CD4-positive, alpha-beta memory T cell (primary cell): ENCODE measurements at regions of chr10 and their contacts with region 1.

Region 1: DNA sequence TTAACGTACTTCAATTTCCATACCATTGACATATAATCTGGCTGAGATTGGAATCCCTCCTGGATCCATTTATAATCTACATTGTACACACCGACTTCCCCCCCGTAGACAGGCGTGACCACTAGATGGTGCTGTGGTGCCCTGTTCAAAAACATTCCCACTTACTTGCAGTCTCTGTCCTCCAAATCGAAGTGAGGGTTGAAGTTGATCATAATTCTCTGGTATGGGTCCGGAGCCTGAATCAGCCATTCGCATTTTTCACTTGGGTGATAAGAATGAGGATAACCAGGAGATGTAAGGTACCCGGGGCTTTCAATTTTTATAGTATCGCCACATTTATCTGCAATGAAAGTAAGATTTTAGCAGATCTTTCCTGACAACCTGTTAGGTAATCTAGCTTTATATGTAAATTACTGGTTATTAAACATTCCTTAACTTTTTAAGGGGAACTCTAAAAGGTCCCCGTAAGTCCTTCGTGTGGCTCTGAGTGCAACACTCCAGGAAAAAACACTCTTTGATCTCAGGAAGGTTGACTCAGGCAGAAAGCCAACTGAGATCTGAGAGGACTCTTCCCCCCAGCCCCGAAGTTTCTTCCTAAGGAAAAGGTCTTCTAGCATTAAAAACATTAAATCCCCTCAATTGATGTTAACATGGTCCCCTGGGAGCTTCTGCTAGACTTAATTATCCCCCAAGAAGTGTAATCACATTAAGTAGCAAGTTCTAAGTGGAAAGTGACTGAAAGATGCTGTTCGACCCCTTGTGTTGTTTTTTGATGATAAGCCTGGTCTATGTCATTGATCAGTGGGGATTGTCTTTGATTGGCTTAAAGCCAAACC is 3.7 kb downstream of the NRP1 start:
- DNase-seq: peak; percentile 49 to 67 (median 64)
- H3K4me3 ChIP-seq: no peak overlapping the region
- H3K4me3 Mint-ChIP-seq: peak overlapping the region in 4 of 8 donors; percentile 55 to 59 (median 56)
- H3K27ac ChIP-seq: no peak overlapping the region
- H3K27ac Mint-ChIP-seq: no peak overlapping the region
- H3K4me1 ChIP-seq: peaks cover 15% of the 10 kb centered on the region
- H3K4me1 Mint-ChIP-seq: peaks cover 9 to 27% (median 16%) of the 10 kb centered on the region in 4 donors
- H3K27me3 ChIP-seq: peaks cover 13% of the 10 kb centered on the region
- H3K27me3 Mint-ChIP-seq: peaks cover 50% of the 10 kb centered on the region in 2 donors

Region 2: DNA sequence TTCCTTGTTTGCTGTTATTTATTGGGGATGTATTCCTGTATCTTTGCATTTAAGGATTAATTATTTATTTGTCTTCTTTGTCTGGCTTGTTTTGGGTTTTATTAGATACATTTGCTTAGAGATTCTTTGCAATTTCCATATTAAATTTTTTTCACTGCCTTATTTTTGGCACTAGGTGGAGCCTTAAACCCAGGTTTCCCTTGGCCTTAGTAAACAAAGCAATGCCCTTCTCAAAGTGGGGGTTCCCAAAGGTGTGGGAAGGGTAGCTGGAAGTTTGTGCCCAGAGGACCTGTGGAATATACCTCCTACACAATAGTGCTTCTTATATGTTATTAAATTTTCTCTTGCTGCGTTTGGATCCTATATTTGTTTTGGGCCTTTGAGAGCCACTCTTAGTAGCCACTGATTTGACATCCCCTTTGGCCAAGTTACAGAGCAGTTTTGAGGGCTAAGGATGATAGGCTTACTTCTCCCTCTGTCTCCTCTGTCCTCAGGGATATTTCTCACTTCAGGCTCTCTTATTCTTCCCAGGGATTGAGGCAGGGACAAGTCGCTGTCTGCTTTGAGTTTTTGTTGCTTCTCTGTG is 535.1 kb before region 1 on chr10:
- CTCF ChIA-PET with region 1: no interaction called
- POLR2A ChIA-PET with region 1: no interaction called
- intact Hi-C with region 1: loop called (anchors 1 kb)
- DNase-seq: peak in 4 of 5 donors; percentile 34 to 46 (median 35)
- H3K4me3 ChIP-seq: no peak overlapping the region
- H3K4me3 Mint-ChIP-seq: no peak overlapping the region
- H3K27ac ChIP-seq: no peak overlapping the region
- H3K27ac Mint-ChIP-seq: peak overlapping the region in 4 of 7 donors; percentile 1 to 47 (median 22)
- H3K4me1 ChIP-seq: no peaks in the 10 kb centered on the region
- H3K4me1 Mint-ChIP-seq: peaks cover 0 to 5% (median 2%) of the 10 kb centered on the region in 4 donors
- H3K27me3 ChIP-seq: no peaks in the 10 kb centered on the region
- H3K27me3 Mint-ChIP-seq: no peaks in the 10 kb centered on the region

Region 3: GRCh38 chr10:33248638-33249037 is 82.1 kb before region 1 on chr10:
- CTCF ChIA-PET with region 1: interaction called, 3 read pairs
- POLR2A ChIA-PET with region 1: no interaction called
- intact Hi-C with region 1: loop called (anchors 5 kb)
- DNase-seq: peak; percentile 69 to 78 (median 74)
- H3K4me3 ChIP-seq: peak overlapping the region in 1 of 2 donors; percentile 12
- H3K4me3 Mint-ChIP-seq: peak overlapping the region; percentile 55 to 86 (median 80)
- H3K27ac ChIP-seq: peak overlapping the region; percentile 2
- H3K27ac Mint-ChIP-seq: peak overlapping the region; percentile 61 to 90 (median 82)
- H3K4me1 ChIP-seq: peaks cover 33% of the 10 kb centered on the region
- H3K4me1 Mint-ChIP-seq: peaks cover 26 to 72% (median 37%) of the 10 kb centered on the region in 4 donors
- H3K27me3 ChIP-seq: no peaks in the 10 kb centered on the region
- H3K27me3 Mint-ChIP-seq: no peaks in the 10 kb centered on the region

Region 4: DNA sequence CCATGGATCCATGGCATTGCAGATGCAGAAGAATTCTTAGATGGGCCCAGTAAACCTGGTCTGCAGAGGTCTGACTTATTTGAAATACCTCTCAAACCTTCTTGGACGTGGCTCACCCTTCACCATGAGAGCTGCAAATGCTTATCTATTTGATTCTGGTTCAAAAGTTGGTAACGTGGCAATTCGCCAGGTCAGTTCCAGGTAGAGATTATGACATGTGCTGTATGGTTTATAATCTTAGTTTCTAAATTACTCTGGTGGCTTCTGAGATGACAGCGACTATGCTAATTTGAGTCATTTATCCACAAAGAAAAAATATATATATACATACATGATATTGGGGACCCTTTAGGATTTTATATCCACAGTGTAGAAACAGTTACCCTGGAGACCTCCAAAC is 65.1 kb before region 1 on chr10:
- CTCF ChIA-PET with region 1: no interaction called
- POLR2A ChIA-PET with region 1: no interaction called
- intact Hi-C with region 1: loop called (anchors 5 kb)
- DNase-seq: no peak
- H3K4me3 ChIP-seq: no peak overlapping the region
- H3K4me3 Mint-ChIP-seq: no peak overlapping the region
- H3K27ac ChIP-seq: no peak overlapping the region
- H3K27ac Mint-ChIP-seq: no peak overlapping the region
- H3K4me1 ChIP-seq: peaks cover 7% of the 10 kb centered on the region
- H3K4me1 Mint-ChIP-seq: peaks cover 8 to 15% (median 11%) of the 10 kb centered on the region in 4 donors
- H3K27me3 ChIP-seq: no peaks in the 10 kb centered on the region
- H3K27me3 Mint-ChIP-seq: peaks cover 0 to 2% of the 10 kb centered on the region in 2 donors

Region 5: GRCh38 chr10:33314811-33315561 is 15.8 kb before region 1 on chr10:
- CTCF ChIA-PET with region 1: interaction called, 10 read pairs
- POLR2A ChIA-PET with region 1: no interaction called
- intact Hi-C with region 1: no loop called
- DNase-seq: no peak
- H3K4me3 ChIP-seq: no peak overlapping the region
- H3K4me3 Mint-ChIP-seq: no peak overlapping the region
- H3K27ac ChIP-seq: no peak overlapping the region
- H3K27ac Mint-ChIP-seq: no peak overlapping the region
- H3K4me1 ChIP-seq: no peaks in the 10 kb centered on the region
- H3K4me1 Mint-ChIP-seq: no peaks in the 10 kb centered on the region
- H3K27me3 ChIP-seq: no peaks in the 10 kb centered on the region
- H3K27me3 Mint-ChIP-seq: peaks cover 4 to 7% of the 10 kb centered on the region in 2 donors

Region 6: DNA sequence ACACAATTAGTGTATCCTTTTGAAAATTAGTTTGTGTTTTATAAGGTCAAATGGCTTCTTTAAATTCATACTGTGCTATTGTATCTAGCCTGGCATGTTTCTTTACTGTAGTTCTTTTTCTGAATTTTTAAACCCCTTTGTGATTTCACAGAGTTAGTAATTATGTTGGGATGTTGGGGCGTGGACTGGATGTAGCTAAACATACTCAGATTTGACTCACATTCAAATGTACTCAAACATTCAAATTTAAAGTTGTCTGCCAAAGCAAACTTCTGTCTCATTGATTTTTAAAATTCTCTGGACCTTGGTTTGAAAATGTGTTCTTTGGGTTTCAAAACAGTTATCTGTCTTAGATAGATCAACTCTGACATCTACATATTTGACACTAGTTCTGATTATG is 10.9 kb after region 1 on chr10:
- CTCF ChIA-PET with region 1: interaction called, 12 read pairs
- POLR2A ChIA-PET with region 1: no interaction called
- intact Hi-C with region 1: no loop called
- DNase-seq: no peak
- H3K4me3 ChIP-seq: no peak overlapping the region
- H3K4me3 Mint-ChIP-seq: peak overlapping the region in 6 of 8 donors; percentile 7 to 72 (median 61)
- H3K27ac ChIP-seq: no peak overlapping the region
- H3K27ac Mint-ChIP-seq: peak overlapping the region in 1 of 7 donors; percentile 75
- H3K4me1 ChIP-seq: no peaks in the 10 kb centered on the region
- H3K4me1 Mint-ChIP-seq: peaks cover 13 to 23% (median 19%) of the 10 kb centered on the region in 4 donors
- H3K27me3 ChIP-seq: peaks cover 4% of the 10 kb centered on the region
- H3K27me3 Mint-ChIP-seq: peaks cover 25 to 27% of the 10 kb centered on the region in 2 donors

Region 7: DNA sequence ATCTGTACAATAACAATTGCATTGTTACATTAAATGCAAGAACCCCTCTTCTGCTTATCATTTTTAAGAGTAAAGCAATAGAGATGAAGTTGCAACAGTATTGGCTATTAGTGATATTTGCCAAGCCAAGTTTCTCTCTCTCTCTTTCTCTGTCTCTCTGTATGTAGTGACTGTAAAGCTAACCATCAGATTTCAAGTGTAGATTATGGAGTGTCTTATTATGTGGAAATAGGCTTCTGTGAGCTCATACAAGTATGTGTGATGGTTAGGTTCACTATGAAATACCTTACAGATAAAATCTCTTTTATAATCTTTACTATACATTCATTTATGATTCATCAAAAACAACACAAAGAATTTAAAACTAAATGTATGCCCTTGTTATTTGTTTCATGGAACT is 32.3 kb after region 1 on chr10:
- CTCF ChIA-PET with region 1: no interaction called
- POLR2A ChIA-PET with region 1: no interaction called
- intact Hi-C with region 1: no loop called
- DNase-seq: no peak
- H3K4me3 ChIP-seq: no peak overlapping the region
- H3K4me3 Mint-ChIP-seq: no peak overlapping the region
- H3K27ac ChIP-seq: no peak overlapping the region
- H3K27ac Mint-ChIP-seq: no peak overlapping the region
- H3K4me1 ChIP-seq: no peaks in the 10 kb centered on the region
- H3K4me1 Mint-ChIP-seq: peaks cover 0 to under 1% (median 0%) of the 10 kb centered on the region in 4 donors
- H3K27me3 ChIP-seq: no peaks in the 10 kb centered on the region
- H3K27me3 Mint-ChIP-seq: peaks cover 20 to 26% of the 10 kb centered on the region in 2 donors

Region 8: GRCh38 chr10:34637418-34637911 is 1306.7 kb after region 1 on chr10:
- CTCF ChIA-PET with region 1: interaction called, 23 read pairs
- POLR2A ChIA-PET with region 1: no interaction called
- intact Hi-C with region 1: no loop called
- DNase-seq: peak; percentile 43 to 55 (median 48)
- H3K4me3 ChIP-seq: no peak overlapping the region
- H3K4me3 Mint-ChIP-seq: peak overlapping the region in 3 of 8 donors; percentile 3 to 47 (median 39)
- H3K27ac ChIP-seq: no peak overlapping the region
- H3K27ac Mint-ChIP-seq: no peak overlapping the region
- H3K4me1 ChIP-seq: no peaks in the 10 kb centered on the region
- H3K4me1 Mint-ChIP-seq: peaks cover 5 to 14% (median 9%) of the 10 kb centered on the region in 4 donors
- H3K27me3 ChIP-seq: no peaks in the 10 kb centered on the region
- H3K27me3 Mint-ChIP-seq: no peaks in the 10 kb centered on the region